Activated CD8-positive, alpha-beta T cell treated with anti-CD3 and anti-CD28 coated beads, Interleukin-2, amount 10 ng/mL, durations not matched to agents 7 days and 5 days (primary cell): ENCODE measurements at regions of chr1 and their contacts with region 1.

Region 1: GRCh38 chr1:12407050-12407961 is 177.5 kb downstream of the VPS13D start:
- DNase-seq: peak; percentile 55
- ATAC-seq: peak; percentile 76
- H3K4me3 Mint-ChIP-seq: no peak overlapping the region
- H3K27ac Mint-ChIP-seq: no peak overlapping the region
- H3K4me1 Mint-ChIP-seq: peaks cover 39% of the 10 kb centered on the region
- H3K27me3 Mint-ChIP-seq: no peaks in the 10 kb centered on the region

Region 2: GRCh38 chr1:12386130-12386529 is 21.2 kb before region 1 on chr1:
- CTCF ChIA-PET with region 1: interaction called, 18 read pairs
- POLR2A ChIA-PET with region 1: interaction called, 3 read pairs
- DNase-seq: no peak
- ATAC-seq: no peak
- H3K4me3 Mint-ChIP-seq: no peak overlapping the region
- H3K27ac Mint-ChIP-seq: peak overlapping the region; percentile 76
- H3K4me1 Mint-ChIP-seq: peaks cover 39% of the 10 kb centered on the region
- H3K27me3 Mint-ChIP-seq: no peaks in the 10 kb centered on the region

Region 3: GRCh38 chr1:12417389-12417788 is 10.1 kb after region 1 on chr1:
- CTCF ChIA-PET with region 1: interaction called, 16 read pairs
- POLR2A ChIA-PET with region 1: no interaction called
- DNase-seq: no peak
- ATAC-seq: no peak
- H3K4me3 Mint-ChIP-seq: no peak overlapping the region
- H3K27ac Mint-ChIP-seq: no peak overlapping the region
- H3K4me1 Mint-ChIP-seq: peaks cover 23% of the 10 kb centered on the region
- H3K27me3 Mint-ChIP-seq: no peaks in the 10 kb centered on the region

Region 4: GRCh38 chr1:12424087-12424529 is 16.8 kb after region 1 on chr1:
- CTCF ChIA-PET with region 1: interaction called, 16 read pairs
- POLR2A ChIA-PET with region 1: no interaction called
- DNase-seq: no peak
- ATAC-seq: no peak
- H3K4me3 Mint-ChIP-seq: no peak overlapping the region
- H3K27ac Mint-ChIP-seq: no peak overlapping the region
- H3K4me1 Mint-ChIP-seq: peaks cover 44% of the 10 kb centered on the region
- H3K27me3 Mint-ChIP-seq: no peaks in the 10 kb centered on the region

Region 5: DNA sequence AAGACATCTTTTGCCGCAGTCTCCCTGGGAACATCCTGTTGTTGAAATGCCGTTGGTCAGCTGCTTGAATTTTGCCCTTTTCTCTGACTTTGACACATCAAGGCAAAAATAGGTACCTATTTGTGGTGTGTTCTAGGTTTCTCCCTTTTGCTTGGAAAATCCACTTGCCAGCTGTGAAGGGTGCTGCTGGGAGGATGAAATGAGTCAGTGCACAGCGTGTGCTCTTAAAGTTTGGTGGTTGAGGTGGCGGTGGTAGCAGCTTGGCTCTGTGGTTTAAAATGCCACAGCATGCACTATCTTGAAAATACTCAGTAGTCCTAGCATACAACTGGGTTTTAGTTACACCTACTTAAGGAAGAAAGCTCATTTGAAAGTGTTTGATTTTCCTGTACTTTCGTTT is 26.9 kb after region 1 on chr1:
- CTCF ChIA-PET with region 1: interaction called, 14 read pairs
- POLR2A ChIA-PET with region 1: interaction called, 4 read pairs
- DNase-seq: peak; percentile 88
- ATAC-seq: peak; percentile 63
- H3K4me3 Mint-ChIP-seq: peak overlapping the region; percentile 56
- H3K27ac Mint-ChIP-seq: peak overlapping the region; percentile 89
- H3K4me1 Mint-ChIP-seq: peaks cover 90% of the 10 kb centered on the region
- H3K27me3 Mint-ChIP-seq: no peaks in the 10 kb centered on the region

Region 6: GRCh38 chr1:12454406-12455391 is 47.4 kb after region 1 on chr1:
- CTCF ChIA-PET with region 1: interaction called, 10 read pairs
- POLR2A ChIA-PET with region 1: no interaction called
- DNase-seq: no peak
- ATAC-seq: no peak
- H3K4me3 Mint-ChIP-seq: no peak overlapping the region
- H3K27ac Mint-ChIP-seq: peak overlapping the region; percentile 86
- H3K4me1 Mint-ChIP-seq: peaks cover 88% of the 10 kb centered on the region
- H3K27me3 Mint-ChIP-seq: no peaks in the 10 kb centered on the region